ENCODE measurements at regions of chr3 and their contacts with region 1.

Region 1: DNA sequence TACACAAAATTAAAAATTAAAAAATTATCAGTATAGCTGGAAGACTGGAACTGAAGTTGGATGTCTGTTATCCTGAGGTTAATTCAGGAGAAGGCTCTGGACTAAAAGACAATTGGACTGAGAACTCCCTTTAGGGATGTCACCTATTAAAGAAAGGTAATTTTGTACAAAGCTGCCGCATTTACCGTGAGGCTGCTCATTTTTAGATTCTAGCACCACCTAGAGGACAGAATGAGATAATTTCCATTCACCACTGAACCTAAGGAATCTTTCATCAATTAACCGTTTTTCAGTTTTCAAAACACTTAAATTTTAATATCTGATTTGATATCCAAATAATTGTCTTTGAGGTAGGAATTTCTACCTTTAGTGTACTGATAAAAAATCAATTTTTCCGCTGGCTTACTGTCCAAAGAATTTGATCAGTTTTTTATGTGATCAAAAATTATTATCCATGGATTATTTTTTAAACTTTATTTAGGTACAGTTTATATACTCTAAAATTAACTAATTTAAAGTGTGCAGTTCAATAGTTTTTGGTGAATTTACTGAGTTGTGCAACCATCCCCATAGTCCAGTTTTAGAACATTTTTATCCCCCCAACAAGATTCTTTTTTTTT is 106.7 kb upstream of the TNIK start:
- DNase-seq: peak in 2 of 5 donors; percentile 62 to 65
- H3K4me3 ChIP-seq: no peak overlapping the region
- H3K27ac ChIP-seq: no peak overlapping the region
- H3K4me1 ChIP-seq: no peaks in the 10 kb centered on the region
- H3K27me3 ChIP-seq: no peaks in the 10 kb centered on the region
- CTCF ChIP-seq: peak; percentile 80

Region 2: GRCh38 chr3:170953229-170953628 is 613.7 kb before region 1 on chr3:
- intact Hi-C with region 1: loop called (anchors 10 kb)
- DNase-seq: peak in 1 of 5 donors; percentile 51
- H3K4me3 ChIP-seq: no peak overlapping the region
- H3K27ac ChIP-seq: no peak overlapping the region
- H3K4me1 ChIP-seq: no peaks in the 10 kb centered on the region
- H3K27me3 ChIP-seq: no peaks in the 10 kb centered on the region
- CTCF ChIP-seq: no peak

Region 3: DNA sequence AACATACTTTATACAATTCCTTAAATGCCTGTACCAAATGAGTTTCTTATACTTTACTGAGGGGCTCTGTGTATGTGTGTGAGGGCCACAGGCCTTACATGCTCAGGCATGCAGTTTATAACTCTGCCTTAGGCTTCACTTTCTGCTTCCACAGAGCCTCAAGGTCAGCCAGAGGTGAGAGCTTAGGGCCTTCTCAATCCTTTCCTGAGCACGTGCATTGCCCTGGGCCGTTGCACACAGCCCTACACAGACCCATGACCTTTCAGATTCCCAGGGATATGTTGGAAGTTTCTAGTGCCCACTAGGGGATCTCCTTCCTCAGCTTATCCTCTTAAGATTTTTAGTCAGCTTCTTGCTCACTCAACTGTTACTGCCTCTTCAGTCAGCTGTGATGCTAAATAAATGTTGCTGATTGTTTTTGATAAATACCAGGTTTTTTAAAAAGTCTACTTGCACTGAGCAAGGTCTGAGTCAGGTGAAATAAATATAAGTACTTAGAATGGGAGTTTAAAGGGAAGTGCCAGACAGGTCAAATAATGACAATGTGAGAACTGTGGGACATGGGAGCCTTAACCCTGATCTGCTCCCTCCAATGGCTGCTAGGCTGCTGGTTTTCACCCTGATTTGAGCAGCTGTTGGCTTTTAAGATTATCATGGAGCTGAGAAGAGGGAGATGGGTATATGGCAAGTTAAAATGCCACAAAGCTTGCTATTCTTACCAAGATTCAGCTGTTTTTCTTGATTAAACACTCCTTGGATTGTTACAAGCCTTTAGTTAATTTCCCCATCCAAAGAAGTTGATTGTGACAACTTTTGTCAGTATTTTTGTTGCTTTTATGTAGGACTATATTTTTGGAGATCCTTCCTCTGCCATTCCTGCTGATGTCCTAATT is 73.9 kb after region 1 on chr3:
- intact Hi-C with region 1: no loop called
- DNase-seq: peak in 4 of 5 donors; percentile 50 to 69 (median 59)
- H3K4me3 ChIP-seq: no peak overlapping the region
- H3K27ac ChIP-seq: peak overlapping the region; percentile 44 to 45
- H3K4me1 ChIP-seq: peaks cover 0 to 9% (median 8%) of the 10 kb centered on the region in 3 donors
- H3K27me3 ChIP-seq: no peaks in the 10 kb centered on the region
- CTCF ChIP-seq: no peak

Region 4: GRCh38 chr3:171729452-171730334 is 162.8 kb after region 1 on chr3:
- intact Hi-C with region 1: no loop called
- DNase-seq: no peak
- H3K4me3 ChIP-seq: no peak overlapping the region
- H3K27ac ChIP-seq: no peak overlapping the region
- H3K4me1 ChIP-seq: no peaks in the 10 kb centered on the region
- H3K27me3 ChIP-seq: no peaks in the 10 kb centered on the region
- CTCF ChIP-seq: no peak

Measured in kidney (tissue), 22 donors.